GM10248 (cell line): ENCODE measurements at regions of chr5 and their contacts with region 1.

Region 1: DNA sequence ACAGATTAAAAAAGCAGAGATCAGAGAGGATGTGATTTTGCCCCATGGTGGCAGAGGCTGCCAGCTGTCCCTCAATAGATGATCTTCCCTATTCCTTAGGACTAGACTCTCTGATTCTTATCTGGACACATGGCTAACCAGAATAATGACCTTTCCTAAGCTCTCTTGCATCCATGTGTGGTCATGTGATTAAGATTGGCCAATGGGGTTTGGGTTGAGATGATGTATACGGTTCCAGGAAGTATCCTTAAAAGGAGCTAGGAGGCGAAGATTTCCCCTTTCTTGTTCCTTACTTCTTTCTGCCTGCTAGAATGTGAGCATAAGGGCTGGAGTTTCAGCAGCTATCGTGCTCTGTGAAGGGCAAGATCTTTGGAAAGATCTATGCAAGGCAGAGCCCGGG is 39.8 kb downstream of the FOXI1 start:
- DNase-seq: no peak
- CTCF ChIP-seq: no peak

Region 2: DNA sequence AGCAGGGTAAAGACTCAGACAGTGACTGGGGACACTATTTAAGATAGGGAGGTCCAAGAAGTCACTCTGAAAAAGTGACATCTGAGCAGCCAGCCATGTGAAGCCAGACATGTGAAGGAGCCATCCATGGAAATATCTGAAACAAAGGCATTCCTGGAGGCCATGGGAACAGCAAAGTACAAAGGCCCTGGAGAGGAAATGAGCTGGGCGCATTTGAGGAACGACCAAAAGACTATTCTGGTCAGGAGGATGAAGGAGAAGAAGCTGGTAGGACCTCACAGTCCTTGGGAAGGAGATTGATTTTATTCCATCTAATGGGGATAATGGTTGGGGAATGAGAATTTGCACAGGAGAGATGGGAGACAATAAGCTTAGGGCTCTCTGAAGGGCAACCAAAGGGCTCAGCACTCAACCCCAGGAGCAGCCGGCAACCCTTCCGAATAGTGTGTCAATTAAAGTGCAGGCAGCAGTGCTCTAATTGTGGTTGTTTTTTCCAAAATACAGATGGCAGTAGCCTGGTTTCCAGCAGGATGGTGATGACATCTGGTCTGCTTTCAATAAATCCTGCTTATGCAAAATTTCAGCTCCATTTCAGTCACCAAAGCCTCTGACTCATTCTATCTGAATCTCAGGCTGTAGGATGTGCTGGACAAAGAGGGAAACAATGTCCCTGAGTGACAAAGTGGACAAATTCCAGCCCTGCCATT is 13.0 kb before region 1 on chr5:
- CTCF ChIA-PET with region 1: interaction called, 12 read pairs
- POLR2A ChIA-PET with region 1: no interaction called
- DNase-seq: no peak
- CTCF ChIP-seq: no peak

Region 3: DNA sequence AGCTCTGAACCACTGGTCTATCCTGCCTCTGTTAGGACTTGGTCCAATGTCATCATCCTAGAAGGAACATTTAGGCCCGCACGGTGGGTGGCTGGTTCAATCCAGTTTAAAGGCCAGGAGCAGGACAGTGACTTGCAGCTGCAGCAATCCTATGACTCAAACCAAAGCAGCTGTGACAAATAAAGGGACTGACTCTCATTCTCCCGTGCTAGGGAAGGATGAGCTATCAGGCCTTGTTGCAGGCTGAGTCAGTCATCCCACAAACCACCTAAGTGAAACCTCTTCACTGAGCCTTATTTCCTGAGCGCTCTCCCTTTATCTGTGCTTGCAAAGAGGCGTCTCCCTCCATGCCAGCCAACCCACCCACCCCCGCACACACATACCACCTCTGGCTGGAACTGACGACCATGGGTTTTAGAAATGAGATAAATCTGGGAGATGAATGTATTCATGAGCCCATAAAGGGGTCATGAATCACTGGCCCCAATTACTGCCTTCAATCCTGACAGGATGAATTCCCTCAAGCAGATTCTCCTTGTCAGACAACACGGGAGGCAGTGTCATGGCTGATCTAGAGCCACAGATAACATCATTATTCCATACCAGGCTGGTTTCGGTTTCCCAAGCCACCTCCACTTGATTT is 451.8 kb after region 1 on chr5:
- CTCF ChIA-PET with region 1: no interaction called
- POLR2A ChIA-PET with region 1: no interaction called
- DNase-seq: no peak
- CTCF ChIP-seq: no peak